Panc1 (cell line): ENCODE measurements at regions of chr19 and their contacts with region 1.

Region 1: DNA sequence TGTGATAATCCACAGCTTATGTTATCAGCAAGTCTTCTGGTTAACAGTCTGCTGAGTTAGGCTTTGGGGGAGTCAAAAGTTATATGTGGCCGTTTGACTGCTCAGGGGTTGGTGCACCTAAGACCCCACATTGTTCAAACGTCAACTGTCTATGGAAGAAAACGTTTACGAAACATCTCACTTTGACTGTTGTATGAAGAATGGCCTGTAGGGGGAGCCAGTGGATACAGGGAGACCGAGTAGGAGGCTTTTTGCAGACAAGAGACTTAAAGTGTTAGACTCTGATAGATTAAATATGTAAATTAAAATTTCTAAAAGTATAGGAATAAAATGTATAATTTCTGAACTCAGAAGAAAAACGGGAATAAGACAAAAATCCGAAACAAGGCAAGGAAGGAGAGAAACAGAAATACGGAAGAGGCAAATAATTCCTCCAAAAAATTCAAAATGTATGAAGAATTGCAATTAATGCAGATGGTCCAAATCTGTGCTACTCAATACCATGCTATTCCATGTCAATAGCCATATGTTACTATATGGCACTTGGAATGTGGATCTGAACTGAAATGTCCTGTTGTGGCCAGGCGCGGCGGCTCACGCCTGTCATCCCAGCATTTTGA is 37.8 kb downstream of the TNFSF14 start:
- DNase-seq: no peak
- ATAC-seq: peak; percentile 80; the same call in 1 of the 2 replicates
- H3K4me3 ChIP-seq: no peak overlapping the region
- H3K27ac ChIP-seq: no peak overlapping the region
- H3K4me1 ChIP-seq: no peaks in the 10 kb centered on the region
- H3K27me3 ChIP-seq: no peaks in the 10 kb centered on the region
- CTCF ChIP-seq: peak; percentile 85

Region 2: DNA sequence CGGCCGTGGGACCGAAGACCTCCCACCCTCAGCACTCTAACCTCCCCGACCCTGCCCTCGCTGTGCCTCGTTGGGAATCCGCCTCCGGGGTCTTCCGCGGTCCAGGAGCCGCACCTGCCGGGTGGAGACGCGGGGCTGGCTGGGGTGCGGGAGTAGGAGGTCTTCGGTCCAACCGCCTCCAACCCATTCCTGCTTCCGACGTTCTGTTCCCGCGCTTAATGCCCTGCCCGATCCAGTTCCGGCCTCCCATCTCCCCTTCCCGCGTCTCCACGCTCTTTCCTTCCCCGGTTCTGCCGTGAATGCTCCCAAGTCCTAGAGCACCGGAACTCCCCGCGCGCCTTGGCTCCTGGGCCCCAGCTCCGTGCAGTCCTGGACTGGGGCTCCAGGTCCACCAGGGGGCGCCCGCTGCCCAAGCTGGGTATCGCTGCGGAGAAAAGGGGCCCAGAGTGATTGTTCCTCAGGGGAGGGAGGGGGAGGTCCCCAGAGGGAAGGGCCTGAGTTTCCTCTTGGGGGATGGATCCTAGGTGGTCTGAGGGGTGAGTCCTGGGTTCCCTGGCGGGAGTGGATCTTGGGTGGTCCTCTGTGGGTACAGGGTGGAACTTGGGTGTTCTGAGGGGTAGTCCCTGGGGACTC is 115.3 kb before region 1 on chr19:
- CTCF ChIA-PET with region 1: interaction called, 6 read pairs
- POLR2A ChIA-PET with region 1: interaction called, 12 read pairs
- in situ Hi-C with region 1: no loop called
- intact Hi-C with region 1: loop called (anchors 2 kb)
- DNase-seq: no peak
- ATAC-seq: peak; percentile 94
- H3K4me3 ChIP-seq: peak overlapping the region; percentile 71 to 75
- H3K27ac ChIP-seq: peak overlapping the region; percentile 61; the same call in 1 of the 2 replicates
- H3K4me1 ChIP-seq: peaks cover 5% of the 10 kb centered on the region; the same call in 1 of the 2 replicates
- H3K27me3 ChIP-seq: no peaks in the 10 kb centered on the region
- CTCF ChIP-seq: peak; percentile 95

Region 3: DNA sequence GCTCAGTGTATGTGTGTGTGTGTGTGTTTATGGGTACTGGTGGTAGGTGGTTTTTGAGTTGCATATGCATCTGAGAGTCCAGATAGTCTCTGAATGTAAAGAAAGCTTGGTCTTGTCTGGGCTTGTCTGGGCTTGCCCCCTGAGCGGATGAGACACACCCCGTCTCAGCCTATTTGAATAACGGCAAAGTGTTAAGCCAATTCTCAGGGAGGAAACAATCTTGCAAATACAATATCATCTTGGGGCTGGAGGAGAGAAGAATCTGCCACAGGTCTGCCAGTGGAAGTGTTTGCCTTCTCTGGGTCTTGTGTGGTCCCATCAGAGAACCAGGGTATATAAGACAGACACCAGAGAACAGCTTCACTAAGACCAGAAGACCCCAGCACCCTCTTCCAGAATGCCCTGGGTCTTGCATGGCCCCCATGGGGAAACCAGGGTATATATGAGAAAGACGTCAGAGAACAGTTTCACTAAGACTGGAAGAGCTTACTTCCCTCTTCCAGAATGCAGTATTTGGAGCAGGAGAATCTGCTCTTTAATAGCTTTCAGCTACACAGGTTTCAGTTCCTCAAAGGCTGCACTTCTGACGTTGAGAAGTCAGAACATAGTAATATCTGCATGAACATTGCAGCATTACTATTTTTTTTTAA is 54.5 kb before region 1 on chr19:
- CTCF ChIA-PET with region 1: interaction called, 10 read pairs
- POLR2A ChIA-PET with region 1: no interaction called
- in situ Hi-C with region 1: no loop called
- intact Hi-C with region 1: no loop called
- DNase-seq: no peak
- ATAC-seq: no peak
- H3K4me3 ChIP-seq: no peak overlapping the region
- H3K27ac ChIP-seq: no peak overlapping the region
- H3K4me1 ChIP-seq: no peaks in the 10 kb centered on the region
- H3K27me3 ChIP-seq: no peaks in the 10 kb centered on the region
- CTCF ChIP-seq: no peak